CD8-positive, alpha-beta T cell (primary cell): ENCODE measurements at regions of chr6 and their contacts with region 1.

Region 1: DNA sequence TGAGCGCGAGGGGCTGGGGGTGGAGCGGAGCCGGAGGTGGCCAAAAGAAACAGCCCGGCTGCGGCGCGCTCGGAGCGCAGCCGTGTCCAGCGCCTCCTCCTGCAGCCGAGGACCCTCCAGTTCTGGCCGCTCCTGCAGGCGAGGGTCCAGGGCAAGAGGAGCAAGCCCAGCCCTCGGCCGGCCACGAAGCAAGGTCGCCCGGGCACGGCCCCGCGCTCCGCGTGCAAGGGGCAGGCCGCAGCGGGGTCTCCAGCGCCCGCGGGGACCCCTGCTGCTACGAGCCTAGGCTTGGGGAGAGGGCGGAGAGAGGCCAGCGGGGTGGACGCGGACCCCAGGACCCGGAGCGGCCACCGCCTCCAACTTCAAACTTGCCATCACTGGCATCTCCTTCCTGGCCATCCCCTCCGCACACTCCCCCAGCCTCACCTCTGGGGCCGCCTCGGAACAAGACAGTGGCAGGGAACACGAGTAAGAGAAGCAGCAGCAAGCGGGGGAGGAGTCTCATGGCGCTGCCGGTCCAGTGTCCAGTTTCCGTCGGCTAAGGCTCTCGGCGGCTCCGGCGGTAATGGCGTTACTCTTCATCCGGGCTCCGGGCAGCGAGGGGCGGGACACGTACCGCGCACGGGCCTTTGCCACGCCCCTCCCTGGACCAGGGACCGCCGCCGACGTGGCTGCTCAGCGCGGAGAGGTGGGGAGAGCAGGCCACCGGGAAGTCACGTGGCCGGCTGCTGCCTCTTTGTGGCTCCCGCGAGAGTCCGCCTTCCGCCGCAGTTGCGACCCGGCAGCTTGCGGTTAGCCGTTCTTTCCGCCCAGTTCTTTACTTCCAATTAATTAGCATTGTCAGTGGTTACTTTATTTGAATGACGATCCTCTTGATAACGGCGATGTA is at the start of gene SSR1:
- DNase-seq: peak; percentile 84 to 97 (median 93)
- ATAC-seq: peak; percentile 94
- H3K4me3 ChIP-seq: peak within 1 kb of the TSS; percentile 76 to 98
- H3K4me3 Mint-ChIP-seq: peak within 1 kb of the TSS; percentile 88
- H3K27ac ChIP-seq: peak within 1 kb of the TSS; percentile 71 to 84
- H3K27ac Mint-ChIP-seq: peak within 1 kb of the TSS; percentile 91
- H3K4me1 ChIP-seq: peaks cover 34% of the 10 kb centered on the region
- H3K4me1 Mint-ChIP-seq: peaks cover 53% of the 10 kb centered on the region
- H3K27me3 ChIP-seq: no peaks in the 10 kb centered on the region
- H3K27me3 Mint-ChIP-seq: no peaks in the 10 kb centered on the region
- CTCF ChIP-seq: no peak
- total RNA-seq, gene SSR1: 40.5 to 42.5 TPM

Region 2: GRCh38 chr6:6661684-6662083 is 651.2 kb before region 1 on chr6:
- CTCF ChIA-PET with region 1: no interaction called
- POLR2A ChIA-PET with region 1: no interaction called
- intact Hi-C with region 1: loop called in 1 of 2 experiments (anchors 1 kb)
- DNase-seq: no peak
- ATAC-seq: no peak
- H3K4me3 ChIP-seq: no peak overlapping the region
- H3K4me3 Mint-ChIP-seq: no peak overlapping the region
- H3K27ac ChIP-seq: no peak overlapping the region
- H3K27ac Mint-ChIP-seq: no peak overlapping the region
- H3K4me1 ChIP-seq: peaks cover 34% of the 10 kb centered on the region
- H3K4me1 Mint-ChIP-seq: peaks cover 56% of the 10 kb centered on the region
- H3K27me3 ChIP-seq: no peaks in the 10 kb centered on the region
- H3K27me3 Mint-ChIP-seq: no peaks in the 10 kb centered on the region
- CTCF ChIP-seq: no peak

Region 3: GRCh38 chr6:7238900-7239589 is 73.8 kb before region 1 on chr6:
- CTCF ChIA-PET with region 1: no interaction called
- POLR2A ChIA-PET with region 1: no interaction called
- intact Hi-C with region 1: no loop called
- DNase-seq: peak; percentile 17 to 80 (median 73)
- ATAC-seq: peak; percentile 69
- H3K4me3 ChIP-seq: no peak overlapping the region
- H3K4me3 Mint-ChIP-seq: no peak overlapping the region
- H3K27ac ChIP-seq: no peak overlapping the region
- H3K27ac Mint-ChIP-seq: peak overlapping the region; percentile 55
- H3K4me1 ChIP-seq: no peaks in the 10 kb centered on the region
- H3K4me1 Mint-ChIP-seq: peaks cover 15% of the 10 kb centered on the region
- H3K27me3 ChIP-seq: no peaks in the 10 kb centered on the region
- H3K27me3 Mint-ChIP-seq: no peaks in the 10 kb centered on the region
- CTCF ChIP-seq: peak; percentile 47

Region 4: GRCh38 chr6:7389451-7390225 is 76.8 kb after region 1 on chr6 and contains the starts of genes CAGE1 and RIOK1:
- CTCF ChIA-PET with region 1: no interaction called
- POLR2A ChIA-PET with region 1: interaction called, 12 read pairs
- intact Hi-C with region 1: loop called (anchors 1 kb)
- DNase-seq: peak; percentile 85 to 97 (median 95)
- ATAC-seq: peak; percentile 89
- H3K4me3 ChIP-seq: peak within 1 kb of the TSS; percentile 77 to 91
- H3K4me3 Mint-ChIP-seq: peak within 1 kb of the TSS; percentile 98
- H3K27ac ChIP-seq: peak within 1 kb of the TSS; percentile 90 to 97
- H3K27ac Mint-ChIP-seq: peak within 1 kb of the TSS; percentile 100
- H3K4me1 ChIP-seq: peaks cover 29% of the 10 kb centered on the region
- H3K4me1 Mint-ChIP-seq: peaks cover 49% of the 10 kb centered on the region
- H3K27me3 ChIP-seq: no peaks in the 10 kb centered on the region
- H3K27me3 Mint-ChIP-seq: no peaks in the 10 kb centered on the region
- CTCF ChIP-seq: no peak
- total RNA-seq, gene CAGE1: 0.33 to 0.49 TPM
- total RNA-seq, gene RIOK1: 47.3 to 56.3 TPM

Region 5: DNA sequence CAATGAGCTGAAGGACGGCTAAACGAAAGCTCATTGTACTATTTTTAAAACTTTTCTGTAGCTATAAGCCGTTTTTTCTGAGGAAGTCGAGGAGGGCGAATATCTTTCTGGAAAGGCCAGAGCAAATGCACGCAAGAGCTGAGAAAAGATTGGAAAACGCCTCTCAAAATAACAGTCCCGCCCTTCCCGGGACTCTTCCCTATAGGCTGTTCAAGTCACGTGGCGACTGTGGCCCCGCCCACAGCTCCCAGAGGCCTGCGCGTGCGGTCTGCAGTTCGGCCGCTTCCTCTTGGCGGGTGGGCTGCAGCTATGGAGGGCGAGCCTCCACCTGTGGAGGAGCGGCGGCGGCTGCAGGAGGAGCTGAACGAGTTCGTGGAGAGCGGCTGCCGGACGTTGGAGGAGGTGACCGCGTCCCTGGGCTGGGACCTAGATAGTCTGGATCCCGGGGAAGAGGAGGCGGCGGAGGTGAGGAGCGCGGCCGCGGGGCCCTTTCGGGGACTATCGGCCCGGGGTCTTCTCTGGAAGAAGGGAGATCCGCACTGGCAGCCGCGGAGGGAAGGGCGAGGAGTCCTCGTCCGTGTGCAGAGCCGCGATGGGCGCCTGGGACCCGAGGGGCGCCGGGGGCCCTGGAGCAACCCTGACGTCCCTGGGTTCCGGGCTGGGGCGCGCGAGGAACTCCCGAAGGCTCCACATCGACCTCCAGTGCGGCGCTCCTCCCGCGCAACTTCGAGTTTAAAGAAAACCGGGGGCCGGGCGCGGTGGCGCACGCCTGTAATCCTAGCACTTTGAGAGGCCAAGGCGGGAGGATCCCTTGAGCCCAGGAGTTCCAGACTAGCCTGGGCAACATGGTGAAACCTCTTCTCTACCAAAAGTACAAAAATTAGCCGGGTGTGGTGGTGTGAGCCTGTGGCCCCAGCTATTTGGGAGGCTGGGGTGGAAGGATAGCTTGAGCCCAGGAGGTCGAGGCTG is 277.4 kb after region 1 on chr6 and contains the start of gene SNRNP48:
- CTCF ChIA-PET with region 1: no interaction called
- POLR2A ChIA-PET with region 1: no interaction called
- intact Hi-C with region 1: loop called (anchors 1 to 5 kb)
- DNase-seq: peak; percentile 80 to 94 (median 90)
- ATAC-seq: peak; percentile 97
- H3K4me3 ChIP-seq: peak within 1 kb of the TSS; percentile 76 to 92
- H3K4me3 Mint-ChIP-seq: peak within 1 kb of the TSS; percentile 100
- H3K27ac ChIP-seq: peak within 1 kb of the TSS; percentile 58 to 61
- H3K27ac Mint-ChIP-seq: peak within 1 kb of the TSS; percentile 95
- H3K4me1 ChIP-seq: peaks cover 25% of the 10 kb centered on the region
- H3K4me1 Mint-ChIP-seq: peaks cover 47% of the 10 kb centered on the region
- H3K27me3 ChIP-seq: no peaks in the 10 kb centered on the region
- H3K27me3 Mint-ChIP-seq: no peaks in the 10 kb centered on the region
- CTCF ChIP-seq: no peak
- total RNA-seq, gene SNRNP48: 12.2 to 12.9 TPM

Region 6: GRCh38 chr6:7910654-7911344 is 597.9 kb after region 1 on chr6 and contains the start of gene TXNDC5:
- CTCF ChIA-PET with region 1: no interaction called
- POLR2A ChIA-PET with region 1: no interaction called
- intact Hi-C with region 1: loop called in 1 of 2 experiments (anchors 2 kb)
- DNase-seq: peak; percentile 38 to 81 (median 66)
- ATAC-seq: peak; percentile 87
- H3K4me3 ChIP-seq: peak within 1 kb of the TSS; percentile 69 to 75
- H3K4me3 Mint-ChIP-seq: peak within 1 kb of the TSS; percentile 77
- H3K27ac ChIP-seq: no peak within 1 kb of the TSS
- H3K27ac Mint-ChIP-seq: no peak within 1 kb of the TSS
- H3K4me1 ChIP-seq: peaks cover 15% of the 10 kb centered on the region
- H3K4me1 Mint-ChIP-seq: peaks cover 8% of the 10 kb centered on the region
- H3K27me3 ChIP-seq: no peaks in the 10 kb centered on the region
- H3K27me3 Mint-ChIP-seq: peaks cover 2% of the 10 kb centered on the region
- CTCF ChIP-seq: no peak
- total RNA-seq, gene TXNDC5: 5.8 to 7.6 TPM

Region 7: DNA sequence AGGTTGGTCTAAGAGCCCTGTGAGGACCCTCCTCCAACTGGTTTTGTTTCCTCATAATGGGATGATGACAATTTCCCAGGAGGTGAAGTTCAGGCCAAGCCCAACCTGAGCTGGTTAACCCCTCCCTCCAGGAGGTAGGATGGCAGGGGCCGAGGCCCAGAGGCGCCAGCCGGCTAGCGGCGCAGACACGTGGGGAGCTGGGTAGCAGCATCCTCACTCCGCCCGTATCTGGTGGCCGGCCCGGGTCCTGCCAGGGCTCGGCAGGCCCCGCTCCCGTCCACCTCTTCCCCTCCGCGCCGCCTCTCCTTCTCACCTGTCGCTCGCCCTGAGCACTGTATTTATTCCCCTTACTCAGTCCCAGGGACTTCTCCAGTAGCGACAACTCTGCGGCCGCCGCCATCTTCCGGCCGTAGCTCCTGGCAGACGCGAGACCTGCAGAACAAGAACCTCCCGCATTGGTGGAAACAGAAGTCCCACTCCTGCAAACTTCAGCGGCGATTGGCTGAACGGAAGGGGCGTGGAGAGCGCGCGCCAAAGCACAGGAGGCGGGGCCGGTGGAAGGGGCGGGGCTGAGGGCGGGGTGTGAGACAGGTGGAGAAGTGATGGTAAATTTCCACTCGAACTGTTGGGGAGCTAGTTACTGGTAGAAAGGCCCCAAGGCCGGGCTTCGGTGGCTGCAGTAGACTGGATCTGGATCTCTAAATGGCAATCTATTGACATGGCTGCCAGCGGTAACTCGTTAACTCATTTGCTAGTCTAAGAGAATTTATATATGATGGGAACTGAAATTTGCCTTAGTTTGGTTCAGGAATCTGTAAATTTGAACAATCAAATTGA is 789.5 kb after region 1 on chr6 and contains the start of gene EEF1E1:
- CTCF ChIA-PET with region 1: no interaction called
- POLR2A ChIA-PET with region 1: no interaction called
- intact Hi-C with region 1: loop called (anchors 5 kb)
- DNase-seq: peak; percentile 96 to 98 (median 97)
- ATAC-seq: peak; percentile 97
- H3K4me3 ChIP-seq: peak within 1 kb of the TSS; percentile 81 to 92
- H3K4me3 Mint-ChIP-seq: peak within 1 kb of the TSS; percentile 99
- H3K27ac ChIP-seq: peak within 1 kb of the TSS; percentile 75 to 79
- H3K27ac Mint-ChIP-seq: peak within 1 kb of the TSS; percentile 98
- H3K4me1 ChIP-seq: peaks cover 12% of the 10 kb centered on the region
- H3K4me1 Mint-ChIP-seq: peaks cover 33% of the 10 kb centered on the region
- H3K27me3 ChIP-seq: no peaks in the 10 kb centered on the region
- H3K27me3 Mint-ChIP-seq: peaks cover 14% of the 10 kb centered on the region
- CTCF ChIP-seq: no peak
- total RNA-seq, gene EEF1E1: 19.9 to 20.7 TPM